ENCODE measurements at regions of chr13 and their contacts with region 1.

Region 1: DNA sequence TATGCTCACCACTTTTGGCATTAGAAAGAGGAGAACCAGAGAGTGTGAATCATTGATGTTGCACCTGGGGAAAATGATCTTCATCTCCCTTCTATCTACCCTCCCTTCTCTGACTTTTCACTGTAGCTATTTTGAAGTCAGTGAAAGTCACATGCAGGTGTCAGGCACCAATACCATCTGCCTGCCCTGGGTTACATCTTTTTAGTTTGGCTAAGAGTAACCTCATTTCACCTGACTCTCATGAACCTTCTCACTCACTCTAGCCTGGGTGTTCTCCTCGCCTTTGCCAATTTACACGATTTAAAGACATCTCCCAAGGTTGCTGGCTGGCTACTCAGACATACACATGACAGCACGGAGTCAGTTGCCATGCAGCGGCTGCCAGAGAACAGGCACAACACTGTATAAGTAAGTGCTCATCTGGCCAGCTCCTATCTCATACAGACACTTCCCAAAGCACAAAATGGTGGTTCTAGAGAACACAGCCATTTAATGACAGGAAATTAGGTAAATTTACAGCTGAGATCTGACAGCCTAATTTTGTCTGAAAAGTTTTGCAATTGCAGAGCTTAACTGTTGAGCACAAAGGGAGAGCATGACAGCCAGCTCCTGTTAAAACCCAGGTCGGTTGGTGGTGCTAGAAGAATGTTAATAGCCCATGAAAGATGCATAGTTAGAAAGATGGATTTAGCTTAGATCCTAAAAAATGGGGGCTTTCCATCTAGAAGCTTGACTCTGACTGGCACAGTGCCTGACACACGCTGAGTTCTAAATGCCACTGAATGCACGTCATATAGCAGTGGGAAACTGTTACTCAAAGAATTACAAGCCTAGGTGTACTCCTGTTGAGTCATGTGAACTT is 32.5 kb downstream of the LCP1 start:
- DNase-seq: peak; percentile 81
- H3K4me3 Mint-ChIP-seq: no peak overlapping the region
- H3K27ac Mint-ChIP-seq: peak overlapping the region; percentile 89
- H3K4me1 Mint-ChIP-seq: peaks cover 51% of the 10 kb centered on the region
- H3K27me3 Mint-ChIP-seq: no peaks in the 10 kb centered on the region

Region 2: GRCh38 chr13:46168341-46168740 is 18.8 kb after region 1 on chr13:
- CTCF ChIA-PET with region 1: interaction called, 6 read pairs
- intact Hi-C with region 1: loop called (anchors 1 kb)
- DNase-seq: peak; percentile 89
- H3K4me3 Mint-ChIP-seq: peak overlapping the region; percentile 67
- H3K27ac Mint-ChIP-seq: peak overlapping the region; percentile 94
- H3K4me1 Mint-ChIP-seq: peaks cover 92% of the 10 kb centered on the region
- H3K27me3 Mint-ChIP-seq: no peaks in the 10 kb centered on the region

Region 3: GRCh38 chr13:46176756-46177155 is 27.3 kb after region 1 on chr13:
- CTCF ChIA-PET with region 1: interaction called, 6 read pairs
- intact Hi-C with region 1: loop called (anchors 1 kb)
- DNase-seq: no peak
- H3K4me3 Mint-ChIP-seq: peak overlapping the region; percentile 72
- H3K27ac Mint-ChIP-seq: peak overlapping the region; percentile 98
- H3K4me1 Mint-ChIP-seq: peaks cover 56% of the 10 kb centered on the region
- H3K27me3 Mint-ChIP-seq: no peaks in the 10 kb centered on the region

Region 4: GRCh38 chr13:46211483-46212351 is 62.2 kb after region 1 on chr13 and contains the start of gene LRRC63:
- CTCF ChIA-PET with region 1: interaction called, 3 read pairs
- intact Hi-C with region 1: loop called (anchors 1 kb)
- DNase-seq: peak; percentile 83
- H3K4me3 Mint-ChIP-seq: peak within 1 kb of the TSS; percentile 91
- H3K27ac Mint-ChIP-seq: peak within 1 kb of the TSS; percentile 91
- H3K4me1 Mint-ChIP-seq: peaks cover 14% of the 10 kb centered on the region
- H3K27me3 Mint-ChIP-seq: no peaks in the 10 kb centered on the region
- total RNA-seq, gene LRRC63: 0.24 to 0.32 TPM

Region 5: DNA sequence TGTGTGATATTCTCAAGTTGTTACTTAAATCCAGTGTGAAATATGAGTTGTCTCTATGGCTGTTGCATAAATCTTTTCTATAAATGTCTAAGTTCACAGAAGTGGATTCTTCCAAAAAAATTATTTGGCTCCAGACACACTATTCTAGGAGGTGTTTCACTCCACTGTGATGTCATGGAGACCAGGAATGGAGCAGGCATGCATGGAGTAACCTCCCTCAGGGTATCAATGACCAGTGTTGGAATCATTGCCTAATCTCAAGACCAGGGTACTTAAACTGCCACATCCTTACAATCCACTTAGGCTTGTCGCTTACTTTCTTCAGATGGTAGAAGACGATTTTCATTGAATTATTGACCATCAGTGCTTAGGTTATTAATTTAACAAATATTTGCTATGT is 117.7 kb after region 1 on chr13:
- CTCF ChIA-PET with region 1: no interaction called
- intact Hi-C with region 1: no loop called
- DNase-seq: no peak
- H3K4me3 Mint-ChIP-seq: no peak overlapping the region
- H3K27ac Mint-ChIP-seq: no peak overlapping the region
- H3K4me1 Mint-ChIP-seq: no peaks in the 10 kb centered on the region
- H3K27me3 Mint-ChIP-seq: peaks cover 1% of the 10 kb centered on the region